GM23248 (cell line): ENCODE measurements at regions of chr15 and their contacts with region 1.

Region 1: GRCh38 chr15:71114896-71115554 is at the start of gene THSD4:
- DNase-seq: peak; percentile 91
- H3K4me3 ChIP-seq: peak within 1 kb of the TSS; percentile 91
- H3K27ac ChIP-seq: peak within 1 kb of the TSS; percentile 55
- H3K4me1 ChIP-seq: peaks cover 17% of the 10 kb centered on the region; the same call in 1 of the 2 replicates
- H3K27me3 ChIP-seq: no peaks in the 10 kb centered on the region
- total RNA-seq, gene THSD4: 50.6 and 58.9 TPM in 2 replicates

Region 2: GRCh38 chr15:71443538-71443937 is 328.5 kb after region 1 on chr15:
- in situ Hi-C with region 1: loop called (anchors 5 kb)
- DNase-seq: peak; percentile 66
- H3K4me3 ChIP-seq: no peak overlapping the region
- H3K27ac ChIP-seq: no peak overlapping the region
- H3K4me1 ChIP-seq: peaks cover 21% of the 10 kb centered on the region
- H3K27me3 ChIP-seq: no peaks in the 10 kb centered on the region